PC-9 (cell line): ENCODE measurements at regions of chr20 and their contacts with region 1.

Region 1: GRCh38 chr20:33744773-33745385 is 13.1 kb downstream of the ZNF341 start:
- DNase-seq: no peak
- H3K4me3 ChIP-seq: no peak overlapping the region
- H3K27ac ChIP-seq: no peak overlapping the region
- H3K4me1 ChIP-seq: no peaks in the 10 kb centered on the region
- H3K27me3 ChIP-seq: no peaks in the 10 kb centered on the region
- CTCF ChIP-seq: no peak

Region 2: GRCh38 chr20:33647603-33648395 is 97.1 kb before region 1 on chr20:
- CTCF ChIA-PET with region 1: interaction called, 10 read pairs
- POLR2A ChIA-PET with region 1: no interaction called
- intact Hi-C with region 1: no loop called
- DNase-seq: no peak
- H3K4me3 ChIP-seq: no peak overlapping the region
- H3K27ac ChIP-seq: no peak overlapping the region
- H3K4me1 ChIP-seq: peaks cover 22% of the 10 kb centered on the region
- H3K27me3 ChIP-seq: no peaks in the 10 kb centered on the region
- CTCF ChIP-seq: no peak

Region 3: DNA sequence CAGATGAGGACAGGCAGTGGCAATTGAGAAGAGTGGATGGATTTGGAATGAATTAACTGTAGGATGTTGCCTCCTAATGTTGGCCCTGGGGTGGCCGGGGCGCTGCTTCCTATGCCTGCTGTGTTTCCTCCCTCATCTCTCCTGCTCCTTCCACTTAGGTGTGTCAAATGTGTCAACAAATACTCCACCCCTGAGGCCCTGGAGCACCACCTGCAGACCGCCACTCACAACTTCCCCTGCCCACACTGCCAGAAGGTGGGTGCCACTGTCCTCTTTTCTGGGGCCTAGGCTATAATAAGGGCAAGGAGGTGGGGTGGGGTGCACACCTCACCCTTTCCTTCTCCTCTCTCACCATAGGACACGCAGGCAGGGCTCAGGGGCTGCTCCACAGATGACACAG is 36.3 kb after region 1 on chr20:
- CTCF ChIA-PET with region 1: no interaction called
- POLR2A ChIA-PET with region 1: interaction called, 10 read pairs
- intact Hi-C with region 1: no loop called
- DNase-seq: no peak
- H3K4me3 ChIP-seq: no peak overlapping the region
- H3K27ac ChIP-seq: peak overlapping the region; percentile 98; the same call in 1 of the 2 replicates
- H3K4me1 ChIP-seq: peaks cover 48% of the 10 kb centered on the region
- H3K27me3 ChIP-seq: no peaks in the 10 kb centered on the region
- CTCF ChIP-seq: no peak